ENCODE measurements at regions of chr21 and their contacts with region 1.

Region 1: DNA sequence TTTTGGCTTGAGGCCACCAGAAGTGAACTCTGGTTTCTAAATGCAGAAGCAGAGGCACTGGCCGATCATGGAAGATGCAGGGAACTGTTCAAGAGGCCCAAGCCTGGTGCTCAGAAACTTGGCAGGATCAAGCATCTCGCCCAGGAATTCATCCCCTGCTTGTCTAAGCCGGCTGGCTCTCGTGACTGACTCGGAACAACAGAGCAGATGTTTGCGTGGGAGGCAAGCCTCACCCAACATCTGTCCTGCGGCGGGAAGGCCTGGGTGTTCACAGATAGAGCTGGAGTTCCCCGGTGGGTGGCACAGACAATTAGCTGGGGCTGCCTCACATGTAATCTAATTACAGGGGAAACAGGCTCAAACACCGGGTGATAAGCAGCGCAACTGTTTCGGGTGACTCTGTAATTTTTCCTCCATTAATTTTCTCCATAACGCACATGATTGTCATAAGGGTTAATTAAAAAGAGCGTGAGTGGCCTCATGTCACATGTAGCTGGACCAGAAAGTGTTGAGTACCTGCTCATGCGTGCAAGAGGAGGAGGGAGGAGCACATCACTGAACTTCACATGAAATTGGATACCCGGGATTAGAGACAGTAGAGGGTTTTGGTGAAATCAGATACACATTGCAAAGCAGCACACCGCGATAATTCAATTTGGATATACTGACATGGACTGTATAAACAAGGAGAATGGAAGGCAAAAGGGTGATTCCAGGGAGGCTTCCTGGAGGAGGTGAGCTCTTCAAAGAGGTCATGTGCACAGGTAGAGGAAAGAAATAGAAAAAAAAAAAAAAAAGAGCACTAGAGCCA is 180.0 kb downstream of the ETS2 start:
- DNase-seq: peak; percentile 84

Region 2: DNA sequence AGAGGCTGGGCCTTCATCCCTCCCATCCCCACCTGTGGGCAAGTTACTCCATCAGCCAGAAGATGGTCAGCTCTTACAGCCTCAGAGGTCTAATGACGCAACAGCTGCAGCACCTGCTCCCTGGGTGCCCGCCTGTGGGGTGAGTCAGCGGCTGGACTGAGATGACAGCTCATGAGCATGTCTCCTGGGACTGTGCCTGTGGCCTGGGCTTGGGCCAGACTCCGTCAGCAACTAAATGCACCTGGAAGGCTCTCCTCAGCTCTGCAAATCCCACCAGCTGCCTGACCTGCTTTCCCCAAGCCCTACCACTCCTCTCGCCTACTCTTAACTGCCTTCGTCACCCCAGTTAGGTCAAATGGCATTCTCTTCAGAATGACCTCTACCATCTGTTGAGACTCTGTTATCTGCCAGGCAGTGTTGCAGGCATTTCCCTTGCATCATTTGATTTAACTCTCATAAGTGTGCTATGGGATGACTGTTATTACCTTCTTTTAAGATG is 132.3 kb before region 1 on chr21:
- intact Hi-C with region 1: no loop called
- DNase-seq: no peak

Region 3: DNA sequence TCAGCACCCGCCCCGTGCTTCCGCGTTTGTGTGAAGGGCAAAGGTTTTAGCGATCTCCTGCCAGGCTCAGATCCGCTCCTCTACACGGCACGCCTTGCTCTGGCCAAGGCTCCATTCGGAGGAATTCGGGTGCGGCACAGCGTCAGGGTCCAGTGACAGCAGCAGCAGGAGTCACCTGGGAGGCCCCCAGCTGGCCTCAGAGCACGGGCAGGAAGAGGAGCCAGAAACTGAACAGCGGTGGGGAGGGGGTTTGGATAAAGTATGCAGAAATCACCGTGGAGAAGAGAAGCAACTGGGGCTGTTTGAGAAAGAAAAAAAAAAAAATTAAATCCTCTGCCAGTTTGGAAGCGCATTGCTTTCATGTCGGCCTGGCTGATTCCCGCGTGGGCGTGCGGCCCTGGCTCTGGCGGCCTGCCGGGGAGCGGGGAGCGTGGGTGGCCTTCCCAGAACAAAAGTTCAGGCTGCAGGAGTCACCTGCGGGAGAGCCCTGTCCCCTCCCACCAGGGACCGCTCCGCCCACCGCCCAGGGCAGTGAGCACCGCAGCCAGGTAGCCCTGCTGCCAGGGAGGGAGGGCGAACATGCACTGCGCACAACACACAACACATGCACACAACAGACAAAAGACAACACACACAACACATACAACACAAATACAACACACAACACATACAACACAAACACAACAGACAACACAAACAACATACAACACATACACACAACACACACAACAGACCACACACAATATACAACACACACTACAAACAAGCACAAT is 72.5 kb before region 1 on chr21:
- intact Hi-C with region 1: loop called (anchors 5 kb)
- DNase-seq: peak; percentile 88

Region 4: DNA sequence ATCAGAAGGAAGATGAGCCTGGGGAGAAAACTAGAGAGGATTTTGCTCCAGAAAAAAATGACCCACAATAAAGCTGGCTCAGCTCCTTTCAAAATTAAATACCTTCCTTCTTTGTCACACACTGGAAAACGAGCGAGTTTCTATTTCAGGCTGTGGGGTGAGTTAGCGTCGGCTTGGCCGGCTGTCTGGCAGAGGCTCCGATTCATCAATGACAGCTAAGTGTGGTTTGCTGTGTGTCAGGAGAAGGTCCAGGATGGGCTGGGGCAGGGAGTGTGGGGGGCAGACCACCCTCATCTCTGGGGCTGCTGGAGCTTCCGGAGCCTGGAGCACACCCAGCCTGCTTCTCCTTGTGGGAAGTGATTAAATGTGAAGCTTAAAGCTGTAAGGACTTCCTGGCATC is 59.9 kb before region 1 on chr21:
- intact Hi-C with region 1: loop called (anchors 5 kb)
- DNase-seq: peak; percentile 87

Region 5: DNA sequence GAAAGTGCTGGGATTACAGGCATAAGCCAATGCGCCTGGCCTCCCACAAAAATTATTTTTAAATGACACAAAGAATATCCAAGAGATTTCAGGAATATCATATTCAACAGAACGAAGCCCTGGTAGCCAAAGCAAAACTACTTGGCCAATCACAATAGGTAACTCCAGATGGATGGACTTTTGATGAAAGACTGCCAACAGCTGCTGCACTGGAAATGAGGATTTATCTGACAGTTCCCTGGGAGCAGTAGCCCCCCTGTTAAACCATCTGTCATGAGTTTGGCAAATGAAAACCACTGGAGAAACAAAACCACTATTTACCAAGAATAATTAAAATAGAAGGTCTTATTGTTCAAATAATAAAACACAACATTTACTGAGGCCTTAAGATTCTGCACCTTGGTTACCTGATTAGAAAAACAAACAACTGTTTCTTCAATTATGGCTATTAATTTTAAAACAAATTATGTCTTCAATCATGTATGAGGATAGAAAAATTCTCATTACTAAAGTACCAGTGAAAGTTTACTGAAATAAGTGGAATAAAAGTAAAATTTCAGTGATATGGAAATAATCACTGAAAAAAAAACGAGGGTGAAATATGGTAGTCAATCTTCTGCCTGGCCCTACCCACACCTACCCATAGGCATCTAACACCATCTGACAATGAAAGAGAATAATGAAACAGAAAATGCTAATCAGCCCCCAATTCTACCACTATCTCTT is 231.7 kb after region 1 on chr21:
- intact Hi-C with region 1: no loop called
- DNase-seq: no peak

Measured in cardiac septum (tissue), 1 donor.